ENCODE measurements at regions of chr10 and their contacts with region 1.

Region 1: GRCh38 chr10:96642973-96643372 is 56.2 kb upstream of the TM9SF3 start:
- DNase-seq: peak; percentile 67 to 78
- H3K4me3 ChIP-seq: no peak overlapping the region
- H3K4me3 Mint-ChIP-seq: no peak overlapping the region
- H3K27ac Mint-ChIP-seq: no peak overlapping the region
- H3K4me1 ChIP-seq: peaks cover 7% of the 10 kb centered on the region
- H3K4me1 Mint-ChIP-seq: peaks cover 7% of the 10 kb centered on the region
- H3K27me3 ChIP-seq: no peaks in the 10 kb centered on the region; the same call in 1 of the 2 replicates
- H3K27me3 Mint-ChIP-seq: no peaks in the 10 kb centered on the region
- CTCF ChIP-seq: peak; percentile 39 to 54

Region 2: DNA sequence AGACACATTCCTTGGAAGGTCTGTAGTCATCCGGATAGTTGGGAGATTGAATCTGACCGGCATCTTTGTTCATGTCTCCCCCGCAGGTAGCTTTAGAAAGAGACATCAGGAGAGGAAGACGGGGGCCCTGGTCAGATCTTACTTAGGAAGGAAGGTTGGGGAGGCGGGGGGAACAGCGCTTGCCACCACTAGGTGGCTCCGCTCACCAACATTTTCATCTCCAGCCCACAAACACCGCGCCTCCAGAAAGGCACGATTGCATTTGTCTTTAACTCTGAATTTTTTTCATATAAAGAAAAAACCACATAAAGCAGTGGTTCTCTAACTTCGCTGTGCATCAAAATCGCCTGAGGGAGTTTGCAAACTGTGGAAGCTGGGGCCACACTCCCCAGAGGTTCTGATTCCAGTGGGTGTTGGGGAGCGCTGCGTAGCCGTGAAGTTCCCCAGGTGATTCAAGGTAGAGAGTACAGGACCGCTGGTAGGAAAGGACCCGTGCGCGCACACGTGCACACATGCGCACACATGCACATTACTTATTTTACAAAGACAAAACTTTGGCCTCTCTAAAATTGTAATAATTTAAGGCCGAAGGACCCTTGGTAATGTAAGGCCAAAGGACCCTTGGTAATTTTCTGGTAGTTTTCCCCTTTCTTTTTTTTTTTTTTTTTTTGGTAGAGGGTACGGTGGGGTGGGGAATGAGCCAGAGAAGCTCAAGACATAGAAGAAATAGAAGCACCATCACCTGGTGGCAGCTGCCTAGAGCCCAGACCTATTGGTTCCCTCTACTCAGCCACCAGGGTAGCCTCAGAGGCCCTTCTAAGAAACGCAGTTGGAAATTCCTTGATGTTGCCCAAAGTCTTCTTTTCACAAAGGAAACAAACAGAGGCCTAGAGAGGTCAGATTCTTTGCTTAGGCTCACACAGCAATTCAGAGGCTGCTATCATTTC is 246.8 kb before region 1 on chr10:
- CTCF ChIA-PET with region 1: no interaction called
- POLR2A ChIA-PET with region 1: no interaction called
- intact Hi-C with region 1: loop called (anchors 10 kb)
- DNase-seq: peak; percentile 56 to 67
- H3K4me3 ChIP-seq: 0 out of 2 replicates have a peak overlapping the region, but pooled peaks have one; percentile 8
- H3K4me3 Mint-ChIP-seq: no peak overlapping the region
- H3K27ac Mint-ChIP-seq: no peak overlapping the region
- H3K4me1 ChIP-seq: no peaks in the 10 kb centered on the region
- H3K4me1 Mint-ChIP-seq: no peaks in the 10 kb centered on the region
- H3K27me3 ChIP-seq: no peaks in the 10 kb centered on the region; the same call in 1 of the 2 replicates
- H3K27me3 Mint-ChIP-seq: peaks cover 22% of the 10 kb centered on the region
- CTCF ChIP-seq: peak; percentile 88 to 94

Region 3: GRCh38 chr10:96690755-96691731 is 48.1 kb after region 1 on chr10:
- CTCF ChIA-PET with region 1: interaction called, 8 read pairs
- POLR2A ChIA-PET with region 1: no interaction called
- intact Hi-C with region 1: loop called (anchors 1 kb)
- DNase-seq: no peak
- H3K4me3 ChIP-seq: no peak overlapping the region
- H3K4me3 Mint-ChIP-seq: no peak overlapping the region
- H3K27ac Mint-ChIP-seq: no peak overlapping the region
- H3K4me1 ChIP-seq: no peaks in the 10 kb centered on the region
- H3K4me1 Mint-ChIP-seq: no peaks in the 10 kb centered on the region
- H3K27me3 ChIP-seq: no peaks in the 10 kb centered on the region
- H3K27me3 Mint-ChIP-seq: no peaks in the 10 kb centered on the region
- CTCF ChIP-seq: no peak

Region 4: DNA sequence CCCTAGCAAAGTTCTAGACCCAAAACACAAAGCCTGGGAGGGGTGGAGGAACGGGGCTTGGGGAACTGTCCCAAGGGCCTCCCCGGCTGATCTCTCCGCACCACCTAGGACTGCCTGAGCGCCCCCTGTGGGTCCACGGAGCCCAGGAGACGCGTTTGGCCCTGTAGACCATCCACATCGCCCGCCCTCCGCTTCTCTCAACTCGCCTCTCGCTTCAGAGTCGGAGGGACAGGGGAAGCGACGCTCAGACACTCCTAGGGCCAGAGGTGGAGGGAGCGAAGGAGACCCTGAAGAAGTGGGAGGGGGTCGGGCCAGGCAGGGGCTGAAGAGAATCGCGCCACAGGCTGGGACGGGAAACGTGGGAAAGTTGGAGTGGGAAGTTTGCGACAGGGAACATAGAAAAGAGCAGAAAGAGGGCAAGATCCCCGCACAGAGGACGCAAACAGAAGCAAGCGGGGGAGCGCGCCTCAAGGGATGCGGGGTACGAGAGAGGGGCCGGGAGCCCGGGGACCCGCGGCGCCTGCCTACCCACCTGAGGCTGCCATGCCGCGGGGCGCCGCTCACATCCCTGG is 77.0 kb after region 1 on chr10:
- CTCF ChIA-PET with region 1: interaction called, 7 read pairs
- POLR2A ChIA-PET with region 1: no interaction called
- intact Hi-C with region 1: loop called (anchors 1 kb)
- DNase-seq: peak; percentile 63 to 73
- H3K4me3 ChIP-seq: peak overlapping the region; percentile 54
- H3K4me3 Mint-ChIP-seq: peak overlapping the region; percentile 84
- H3K27ac Mint-ChIP-seq: no peak overlapping the region
- H3K4me1 ChIP-seq: peaks cover 13% of the 10 kb centered on the region; the same call in 1 of the 2 replicates
- H3K4me1 Mint-ChIP-seq: no peaks in the 10 kb centered on the region
- H3K27me3 ChIP-seq: peaks cover 5% of the 10 kb centered on the region
- H3K27me3 Mint-ChIP-seq: peaks cover 19% of the 10 kb centered on the region
- CTCF ChIP-seq: peak; percentile 28 to 54

Region 5: GRCh38 chr10:96743988-96744585 is 101.1 kb after region 1 on chr10:
- CTCF ChIA-PET with region 1: interaction called, 22 read pairs
- POLR2A ChIA-PET with region 1: no interaction called
- intact Hi-C with region 1: loop called (anchors 1 kb)
- DNase-seq: peak in 1 of 2 experiments; percentile 28
- H3K4me3 ChIP-seq: no peak overlapping the region
- H3K4me3 Mint-ChIP-seq: no peak overlapping the region
- H3K27ac Mint-ChIP-seq: no peak overlapping the region
- H3K4me1 ChIP-seq: no peaks in the 10 kb centered on the region
- H3K4me1 Mint-ChIP-seq: peaks cover 8% of the 10 kb centered on the region
- H3K27me3 ChIP-seq: no peaks in the 10 kb centered on the region
- H3K27me3 Mint-ChIP-seq: no peaks in the 10 kb centered on the region
- CTCF ChIP-seq: peak; percentile 33 to 61

Region 6: DNA sequence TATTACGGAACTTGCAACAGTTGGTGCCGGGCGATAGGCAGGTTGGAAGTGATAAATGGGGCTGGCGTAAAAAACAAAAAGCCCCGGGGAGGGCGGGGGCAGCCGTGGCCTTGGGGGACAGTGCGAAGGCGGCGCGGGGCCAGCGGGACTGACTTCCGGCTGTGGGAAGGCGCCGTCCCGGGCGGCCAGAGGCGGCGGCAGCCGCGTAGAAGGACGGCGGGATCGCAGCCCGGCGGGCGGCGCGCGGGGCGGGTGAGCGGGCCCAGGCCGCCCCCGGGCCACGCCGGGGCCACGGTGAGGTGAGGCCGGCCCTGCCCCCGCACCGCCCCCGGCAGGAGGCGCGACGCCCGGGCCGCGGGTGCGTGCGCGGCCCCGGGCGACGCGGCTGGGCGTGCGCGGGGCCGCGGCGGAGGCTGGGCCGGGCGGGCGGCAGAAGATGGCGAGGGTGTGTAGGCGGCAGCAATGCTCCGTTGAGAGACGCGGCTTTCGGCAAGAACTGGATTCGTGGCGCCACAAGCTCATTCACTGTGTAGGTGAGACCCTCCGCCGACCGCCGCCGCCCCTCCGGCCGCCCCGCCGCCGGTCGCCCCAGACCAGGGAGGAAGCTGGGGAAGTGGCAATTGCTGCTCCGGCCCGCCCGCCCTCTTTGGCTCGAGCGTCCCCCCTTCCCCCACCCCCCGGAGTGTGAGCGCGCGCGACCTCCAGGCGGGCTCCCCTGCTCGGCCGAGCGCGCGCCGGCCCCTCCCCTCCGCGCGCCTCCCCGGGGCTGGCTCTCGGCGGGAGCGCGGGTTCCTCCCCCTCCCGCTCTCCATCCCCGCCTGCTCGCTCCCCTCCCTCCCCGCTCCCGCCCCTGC is 189.1 kb after region 1 on chr10 and contains the start of gene LCOR:
- CTCF ChIA-PET with region 1: no interaction called
- POLR2A ChIA-PET with region 1: no interaction called
- intact Hi-C with region 1: loop called (anchors 1 kb)
- DNase-seq: peak; percentile 88 to 93
- H3K4me3 ChIP-seq: peak within 1 kb of the TSS; percentile 98
- H3K4me3 Mint-ChIP-seq: peak within 1 kb of the TSS; percentile 95
- H3K27ac Mint-ChIP-seq: peak within 1 kb of the TSS; percentile 94
- H3K4me1 ChIP-seq: peaks cover 35% of the 10 kb centered on the region
- H3K4me1 Mint-ChIP-seq: peaks cover 23% of the 10 kb centered on the region
- H3K27me3 ChIP-seq: no peaks in the 10 kb centered on the region
- H3K27me3 Mint-ChIP-seq: no peaks in the 10 kb centered on the region
- CTCF ChIP-seq: no peak
- total RNA-seq, gene LCOR: 46.7 and 51.8 TPM in 2 replicates

Region 7: GRCh38 chr10:96935148-96935547 is 292.2 kb after region 1 on chr10:
- CTCF ChIA-PET with region 1: no interaction called
- POLR2A ChIA-PET with region 1: no interaction called
- intact Hi-C with region 1: no loop called
- DNase-seq: no peak
- H3K4me3 ChIP-seq: no peak overlapping the region
- H3K4me3 Mint-ChIP-seq: no peak overlapping the region
- H3K27ac Mint-ChIP-seq: no peak overlapping the region
- H3K4me1 ChIP-seq: peaks cover 3% of the 10 kb centered on the region; the same call in 1 of the 2 replicates
- H3K4me1 Mint-ChIP-seq: no peaks in the 10 kb centered on the region
- H3K27me3 ChIP-seq: no peaks in the 10 kb centered on the region
- H3K27me3 Mint-ChIP-seq: no peaks in the 10 kb centered on the region
- CTCF ChIP-seq: no peak

Measured in Caco-2 (cell line).